ENCODE measurements at regions of chr15 and their contacts with region 1.

Region 1: GRCh38 chr15:72272213-72273002 is at the start of gene PARP6:
- DNase-seq: peak in 1 of 2 donors; percentile 99
- H3K4me3 ChIP-seq: peak within 1 kb of the TSS; percentile 84 to 86
- H3K27ac ChIP-seq: peak within 1 kb of the TSS; percentile 91
- H3K4me1 ChIP-seq: peaks cover 39% of the 10 kb centered on the region
- H3K27me3 ChIP-seq: no peaks in the 10 kb centered on the region
- CTCF ChIP-seq: peak; percentile 54 to 86 (median 70)
- POLR2A ChIP-seq: peak in 1 of 2 donors; percentile 46
- total RNA-seq, gene PARP6: 62.6 TPM

Region 2: GRCh38 chr15:72141171-72142084 is 131.0 kb before region 1 on chr15:
- intact Hi-C with region 1: no loop called
- DNase-seq: no peak
- H3K4me3 ChIP-seq: no peak overlapping the region
- H3K27ac ChIP-seq: no peak overlapping the region
- H3K4me1 ChIP-seq: peaks cover 2% of the 10 kb centered on the region
- H3K27me3 ChIP-seq: no peaks in the 10 kb centered on the region
- CTCF ChIP-seq: no peak
- POLR2A ChIP-seq: no peak

Region 3: GRCh38 chr15:72184165-72184889 is 88.1 kb before region 1 on chr15:
- intact Hi-C with region 1: no loop called
- DNase-seq: no peak
- H3K4me3 ChIP-seq: peak overlapping the region; percentile 17 to 29
- H3K27ac ChIP-seq: no peak overlapping the region
- H3K4me1 ChIP-seq: peaks cover 11% of the 10 kb centered on the region
- H3K27me3 ChIP-seq: no peaks in the 10 kb centered on the region
- CTCF ChIP-seq: no peak
- POLR2A ChIP-seq: no peak

Region 4: GRCh38 chr15:72199711-72200212 is 72.6 kb before region 1 on chr15:
- intact Hi-C with region 1: loop called (anchors 10 kb)
- DNase-seq: no peak
- H3K4me3 ChIP-seq: no peak overlapping the region
- H3K27ac ChIP-seq: no peak overlapping the region
- H3K4me1 ChIP-seq: peaks cover 26% of the 10 kb centered on the region
- H3K27me3 ChIP-seq: no peaks in the 10 kb centered on the region
- CTCF ChIP-seq: peak; percentile 77 to 88 (median 85)
- POLR2A ChIP-seq: no peak

Region 5: GRCh38 chr15:72231066-72231846 is 41.2 kb before region 1 on chr15 and contains the start of gene PKM:
- intact Hi-C with region 1: loop called (anchors 5 kb)
- DNase-seq: peak in 1 of 2 donors; percentile 96
- H3K4me3 ChIP-seq: peak within 1 kb of the TSS; percentile 89 to 97
- H3K27ac ChIP-seq: peak within 1 kb of the TSS; percentile 98
- H3K4me1 ChIP-seq: peaks cover 47% of the 10 kb centered on the region
- H3K27me3 ChIP-seq: no peaks in the 10 kb centered on the region
- CTCF ChIP-seq: peak in 1 of 3 experiments; percentile 20
- POLR2A ChIP-seq: peak in 1 of 2 donors; percentile 95
- total RNA-seq, gene PKM: 484 TPM

Measured in vagina (tissue), 2 donors.